SK-N-SH (cell line): ENCODE measurements at regions of chr14 and their contacts with region 1.

Region 1: GRCh38 chr14:77212943-77213678 is 31.5 kb downstream of the TMEM63C start:
- DNase-seq: peak; percentile 82
- H3K4me3 ChIP-seq: peak overlapping the region in 1 of 2 experiments; percentile 16; a peak in 1 of 4 replicates
- H3K27ac ChIP-seq: no peak overlapping the region
- H3K4me1 ChIP-seq: peaks cover 0 to 3% of the 10 kb centered on the region in 2 experiments; a peak in 1 of 4 replicates
- H3K27me3 ChIP-seq: no peaks in the 10 kb centered on the region
- CTCF ChIP-seq: peak; percentile 61
- EP300 ChIP-seq: no peak
- RAD21 ChIP-seq: peak; percentile 77

Region 2: GRCh38 chr14:77158175-77158891 is 54.8 kb before region 1 on chr14:
- CTCF ChIA-PET with region 1: interaction called, 153 read pairs
- POLR2A ChIA-PET with region 1: no interaction called
- DNase-seq: peak; percentile 76
- H3K4me3 ChIP-seq: no peak overlapping the region
- H3K27ac ChIP-seq: peak overlapping the region in 1 of 2 experiments; percentile 29; a peak in 2 of 4 replicates
- H3K4me1 ChIP-seq: peaks cover 4 to 17% of the 10 kb centered on the region in 2 experiments; a peak in 1 of 4 replicates
- H3K27me3 ChIP-seq: no peaks in the 10 kb centered on the region; the same call in 1 of the 2 replicates
- CTCF ChIP-seq: no peak
- EP300 ChIP-seq: no peak
- RAD21 ChIP-seq: no peak

Region 3: DNA sequence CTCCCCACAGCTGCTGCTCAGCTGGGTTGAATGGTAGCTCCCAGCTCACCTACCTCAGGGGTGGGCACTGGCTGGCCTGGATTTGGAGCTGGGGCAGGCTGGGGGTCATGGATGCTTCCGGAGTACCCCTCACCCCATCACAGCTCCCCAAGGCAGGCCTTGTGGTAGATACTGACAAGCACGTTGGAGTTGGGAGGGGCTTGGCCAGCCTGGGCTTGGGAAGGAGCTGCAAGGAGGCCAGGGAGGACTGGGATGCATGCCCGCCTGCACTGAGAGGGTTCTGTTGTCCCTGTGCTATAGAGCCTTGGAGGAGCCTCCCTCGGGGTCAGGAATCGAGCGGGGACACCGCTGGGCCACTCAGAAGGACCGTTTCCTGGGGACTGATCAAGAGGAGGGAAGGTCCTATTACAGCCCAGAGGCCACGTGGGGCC is 17.3 kb before region 1 on chr14:
- CTCF ChIA-PET with region 1: interaction called, 18 read pairs
- POLR2A ChIA-PET with region 1: no interaction called
- DNase-seq: no peak
- H3K4me3 ChIP-seq: no peak overlapping the region
- H3K27ac ChIP-seq: no peak overlapping the region
- H3K4me1 ChIP-seq: no peaks in the 10 kb centered on the region
- H3K27me3 ChIP-seq: no peaks in the 10 kb centered on the region; the same call in 1 of the 2 replicates
- CTCF ChIP-seq: no peak
- EP300 ChIP-seq: no peak
- RAD21 ChIP-seq: no peak

Region 4: GRCh38 chr14:77240336-77240911 is 27.3 kb after region 1 on chr14:
- CTCF ChIA-PET with region 1: interaction called, 10 read pairs
- POLR2A ChIA-PET with region 1: no interaction called
- DNase-seq: no peak
- H3K4me3 ChIP-seq: no peak overlapping the region
- H3K27ac ChIP-seq: no peak overlapping the region
- H3K4me1 ChIP-seq: no peaks in the 10 kb centered on the region
- H3K27me3 ChIP-seq: no peaks in the 10 kb centered on the region; the same call in 1 of the 2 replicates
- CTCF ChIP-seq: no peak
- EP300 ChIP-seq: no peak
- RAD21 ChIP-seq: no peak

Region 5: DNA sequence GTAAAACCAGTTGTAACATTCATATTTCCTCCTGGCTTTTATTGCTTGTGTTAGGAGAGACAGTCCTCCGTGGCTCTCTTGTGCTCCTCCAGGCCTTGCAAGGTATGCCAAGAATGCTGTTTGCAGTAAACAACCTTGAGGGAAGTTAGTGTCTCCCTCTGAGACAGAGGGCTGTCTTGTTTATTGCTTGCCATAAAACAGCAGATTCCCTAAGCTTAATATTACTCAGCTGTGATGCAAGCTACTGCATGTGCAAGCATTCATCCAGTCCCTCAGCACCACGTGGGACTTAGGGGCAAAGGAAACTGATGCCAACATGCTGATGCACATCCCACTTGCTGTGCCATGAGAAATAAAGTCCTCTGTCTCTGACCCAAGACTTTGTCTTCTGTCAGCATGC is 100.9 kb after region 1 on chr14:
- CTCF ChIA-PET with region 1: interaction called, 26 read pairs
- POLR2A ChIA-PET with region 1: no interaction called
- DNase-seq: no peak
- H3K4me3 ChIP-seq: no peak overlapping the region
- H3K27ac ChIP-seq: peak overlapping the region in 1 of 2 experiments; percentile 36; a peak in 1 of 4 replicates
- H3K4me1 ChIP-seq: peaks cover 7 to 18% of the 10 kb centered on the region in 2 experiments; a peak in 3 of 4 replicates
- H3K27me3 ChIP-seq: no peaks in the 10 kb centered on the region
- CTCF ChIP-seq: no peak
- EP300 ChIP-seq: no peak
- RAD21 ChIP-seq: no peak